ENCODE measurements at regions of chr5 and their contacts with region 1.

Region 1: GRCh38 chr5:140145818-140146522 is 20.2 kb downstream of the IGIP start:
- DNase-seq: no peak
- H3K4me3 ChIP-seq: peak overlapping the region; percentile 48
- CTCF ChIP-seq: peak; percentile 69

Region 2: DNA sequence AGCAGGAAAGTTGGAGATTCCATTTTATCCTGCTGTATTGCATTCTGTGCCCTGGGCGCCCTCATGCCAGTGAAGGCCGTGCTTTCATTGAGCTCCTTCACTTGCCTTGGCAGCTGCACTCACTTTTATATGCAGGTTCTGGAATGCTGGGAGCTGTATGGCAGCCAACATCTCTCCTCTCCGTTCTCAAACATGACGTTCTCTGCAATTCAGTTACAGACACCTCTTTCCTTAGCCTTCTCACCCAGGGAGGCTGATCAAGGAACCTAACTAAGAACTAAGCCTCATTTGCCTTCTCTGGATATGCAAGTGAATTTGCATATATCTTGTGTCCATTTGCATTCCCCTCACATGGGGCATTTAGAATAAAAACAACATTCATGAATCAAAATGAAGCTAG is 61.4 kb before region 1 on chr5:
- CTCF ChIA-PET with region 1: interaction called, 288 read pairs
- POLR2A ChIA-PET with region 1: no interaction called
- DNase-seq: no peak
- H3K4me3 ChIP-seq: no peak overlapping the region
- CTCF ChIP-seq: no peak

Region 3: GRCh38 chr5:140107312-140108083 is 38.5 kb before region 1 on chr5:
- CTCF ChIA-PET with region 1: interaction called, 336 read pairs
- POLR2A ChIA-PET with region 1: no interaction called
- DNase-seq: peak; percentile 51
- H3K4me3 ChIP-seq: peak overlapping the region; percentile 85
- CTCF ChIP-seq: peak; percentile 44

Region 4: GRCh38 chr5:140126315-140127012 is 19.5 kb before region 1 on chr5:
- CTCF ChIA-PET with region 1: interaction called, 336 read pairs
- POLR2A ChIA-PET with region 1: no interaction called
- DNase-seq: no peak
- H3K4me3 ChIP-seq: no peak overlapping the region
- CTCF ChIP-seq: no peak

Region 5: GRCh38 chr5:140157032-140157803 is 11.2 kb after region 1 on chr5:
- CTCF ChIA-PET with region 1: interaction called, 184 read pairs
- POLR2A ChIA-PET with region 1: no interaction called
- DNase-seq: no peak
- H3K4me3 ChIP-seq: peak overlapping the region; percentile 38
- CTCF ChIP-seq: peak; percentile 94